ENCODE measurements at regions of chr3 and their contacts with region 1.

Region 1: GRCh38 chr3:155270485-155271342 is 22.8 kb downstream of the STRIT1 start:
- DNase-seq: peak; percentile 74 to 79
- H3K4me3 ChIP-seq: peak overlapping the region; percentile 49
- H3K27ac ChIP-seq: peak overlapping the region; percentile 98
- H3K4me1 ChIP-seq: peaks cover 33% of the 10 kb centered on the region
- H3K27me3 ChIP-seq: no peaks in the 10 kb centered on the region
- CTCF ChIP-seq: 0 out of 2 replicates have a peak, but pooled peaks have one; percentile 27

Region 2: GRCh38 chr3:154971771-154972326 is 298.9 kb before region 1 on chr3:
- CTCF ChIA-PET with region 1: no interaction called
- POLR2A ChIA-PET with region 1: no interaction called
- intact Hi-C with region 1: loop called (anchors 2 kb)
- DNase-seq: peak in 1 of 2 experiments; percentile 63
- H3K4me3 ChIP-seq: no peak overlapping the region
- H3K27ac ChIP-seq: peak overlapping the region; percentile 62
- H3K4me1 ChIP-seq: peaks cover 21% of the 10 kb centered on the region
- H3K27me3 ChIP-seq: no peaks in the 10 kb centered on the region
- CTCF ChIP-seq: no peak

Region 3: DNA sequence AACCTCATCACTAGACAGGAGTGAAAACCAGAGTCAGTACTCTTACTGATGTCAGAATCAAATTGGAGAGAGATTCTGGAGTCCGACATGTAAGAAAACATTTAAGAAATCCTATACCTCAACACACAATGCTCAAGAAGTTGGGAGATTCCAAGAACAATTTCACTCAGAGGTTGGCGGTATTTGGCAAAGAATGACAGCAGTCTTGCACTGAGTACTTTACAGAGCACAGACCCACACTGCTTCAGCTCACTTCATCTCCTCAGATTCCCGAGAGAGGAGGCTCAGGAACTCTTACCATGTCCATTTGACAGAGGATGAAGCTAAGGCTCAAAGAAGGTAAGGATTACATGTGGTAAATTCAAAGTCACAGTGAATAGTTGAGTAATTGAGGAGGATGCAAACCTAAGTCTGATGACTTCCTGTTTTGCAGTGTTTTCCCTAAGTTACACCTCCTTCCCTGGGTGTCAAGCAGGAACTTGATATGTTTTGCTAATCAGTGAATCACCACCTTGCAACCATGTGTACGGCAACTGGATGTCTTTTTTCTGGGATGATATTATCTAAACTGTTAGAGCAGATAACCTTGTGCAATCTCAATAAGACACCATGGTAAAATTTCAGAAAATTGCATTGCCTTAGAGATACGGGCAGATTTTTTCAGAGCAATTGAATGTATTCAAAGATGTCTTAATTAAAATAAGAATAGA is 251.9 kb before region 1 on chr3:
- CTCF ChIA-PET with region 1: no interaction called
- POLR2A ChIA-PET with region 1: no interaction called
- intact Hi-C with region 1: loop called (anchors 2 kb)
- DNase-seq: peak; percentile 21 to 42
- H3K4me3 ChIP-seq: no peak overlapping the region
- H3K27ac ChIP-seq: peak overlapping the region; percentile 17; the same call in 1 of the 2 replicates
- H3K4me1 ChIP-seq: peaks cover 16% of the 10 kb centered on the region
- H3K27me3 ChIP-seq: no peaks in the 10 kb centered on the region
- CTCF ChIP-seq: no peak

Region 4: DNA sequence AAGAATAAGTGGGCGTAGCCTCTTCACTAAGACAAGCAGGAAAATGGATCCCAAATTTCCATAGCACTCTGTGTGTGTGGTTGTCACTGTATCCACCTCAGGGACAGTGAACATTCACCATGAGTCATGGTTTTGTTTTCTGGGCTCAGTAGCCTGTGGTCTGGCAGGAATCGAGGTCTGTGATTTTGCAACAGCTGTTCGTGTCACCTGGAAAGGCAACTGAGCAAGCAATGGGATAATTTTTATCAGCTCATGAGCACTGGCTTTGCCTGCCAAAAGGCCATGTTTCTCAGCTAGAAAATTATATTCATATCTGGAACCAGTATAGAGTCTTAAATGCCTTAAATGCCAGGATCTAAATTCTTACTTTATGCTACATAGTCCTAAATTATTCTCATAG is 38.1 kb before region 1 on chr3:
- CTCF ChIA-PET with region 1: no interaction called
- POLR2A ChIA-PET with region 1: interaction called, 4 read pairs
- intact Hi-C with region 1: loop called (anchors 1 kb)
- DNase-seq: peak; percentile 75 to 94
- H3K4me3 ChIP-seq: no peak overlapping the region
- H3K27ac ChIP-seq: peak overlapping the region; percentile 67
- H3K4me1 ChIP-seq: peaks cover 23% of the 10 kb centered on the region
- H3K27me3 ChIP-seq: no peaks in the 10 kb centered on the region
- CTCF ChIP-seq: no peak

Region 5: DNA sequence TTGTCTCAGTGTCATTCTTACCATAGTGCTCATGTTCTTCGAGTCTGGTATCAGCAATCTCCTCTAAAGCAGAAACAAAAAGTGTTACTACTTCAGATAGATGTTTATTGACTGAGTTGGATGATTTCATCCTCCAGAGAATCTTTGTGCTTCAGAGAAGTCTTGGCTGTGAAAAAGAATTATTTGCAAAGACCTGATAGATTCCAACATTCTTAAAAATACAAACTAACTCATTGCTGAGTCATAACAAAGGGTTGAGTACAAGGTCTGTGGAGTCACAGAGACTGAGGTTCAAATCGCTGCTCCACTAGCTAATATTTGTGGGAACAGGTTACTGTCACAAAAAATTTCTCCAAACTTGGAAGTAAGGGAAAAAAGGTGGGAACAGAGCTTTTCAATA is 31.8 kb after region 1 on chr3:
- CTCF ChIA-PET with region 1: no interaction called
- POLR2A ChIA-PET with region 1: interaction called, 14 read pairs
- intact Hi-C with region 1: no loop called
- DNase-seq: no peak
- H3K4me3 ChIP-seq: no peak overlapping the region
- H3K27ac ChIP-seq: no peak overlapping the region
- H3K4me1 ChIP-seq: no peaks in the 10 kb centered on the region
- H3K27me3 ChIP-seq: no peaks in the 10 kb centered on the region
- CTCF ChIP-seq: no peak

Region 6: GRCh38 chr3:155330370-155330769 is 59.7 kb after region 1 on chr3:
- CTCF ChIA-PET with region 1: no interaction called
- POLR2A ChIA-PET with region 1: no interaction called
- intact Hi-C with region 1: no loop called
- DNase-seq: no peak
- H3K4me3 ChIP-seq: no peak overlapping the region
- H3K27ac ChIP-seq: no peak overlapping the region
- H3K4me1 ChIP-seq: no peaks in the 10 kb centered on the region
- H3K27me3 ChIP-seq: no peaks in the 10 kb centered on the region
- CTCF ChIP-seq: no peak

Region 7: DNA sequence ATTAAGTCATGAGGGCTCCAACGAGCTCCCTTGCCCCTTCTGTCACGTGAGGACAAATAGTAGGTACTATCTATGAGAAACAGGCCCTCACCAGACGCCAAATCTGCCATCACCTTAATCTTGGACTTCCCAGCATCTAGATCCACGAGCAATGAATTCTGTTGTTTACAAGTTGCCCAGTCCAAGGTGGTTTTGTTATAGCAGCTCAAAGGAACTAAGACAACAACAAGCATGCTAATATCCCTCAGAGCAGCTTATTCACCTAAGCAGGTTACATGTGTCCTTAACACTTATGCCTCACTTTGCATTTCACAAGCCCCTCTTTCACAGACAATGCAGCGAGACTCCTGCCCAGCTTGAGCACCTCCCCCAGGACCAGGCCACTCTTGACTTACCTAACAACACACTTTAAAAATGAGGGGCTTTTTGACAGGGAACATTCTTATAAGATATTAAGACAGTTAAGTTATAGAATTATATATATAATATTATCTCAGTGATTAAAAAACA is 254.7 kb after region 1 on chr3:
- CTCF ChIA-PET with region 1: no interaction called
- POLR2A ChIA-PET with region 1: no interaction called
- intact Hi-C with region 1: no loop called
- DNase-seq: no peak
- H3K4me3 ChIP-seq: no peak overlapping the region
- H3K27ac ChIP-seq: no peak overlapping the region
- H3K4me1 ChIP-seq: no peaks in the 10 kb centered on the region
- H3K27me3 ChIP-seq: no peaks in the 10 kb centered on the region
- CTCF ChIP-seq: no peak

Region 8: DNA sequence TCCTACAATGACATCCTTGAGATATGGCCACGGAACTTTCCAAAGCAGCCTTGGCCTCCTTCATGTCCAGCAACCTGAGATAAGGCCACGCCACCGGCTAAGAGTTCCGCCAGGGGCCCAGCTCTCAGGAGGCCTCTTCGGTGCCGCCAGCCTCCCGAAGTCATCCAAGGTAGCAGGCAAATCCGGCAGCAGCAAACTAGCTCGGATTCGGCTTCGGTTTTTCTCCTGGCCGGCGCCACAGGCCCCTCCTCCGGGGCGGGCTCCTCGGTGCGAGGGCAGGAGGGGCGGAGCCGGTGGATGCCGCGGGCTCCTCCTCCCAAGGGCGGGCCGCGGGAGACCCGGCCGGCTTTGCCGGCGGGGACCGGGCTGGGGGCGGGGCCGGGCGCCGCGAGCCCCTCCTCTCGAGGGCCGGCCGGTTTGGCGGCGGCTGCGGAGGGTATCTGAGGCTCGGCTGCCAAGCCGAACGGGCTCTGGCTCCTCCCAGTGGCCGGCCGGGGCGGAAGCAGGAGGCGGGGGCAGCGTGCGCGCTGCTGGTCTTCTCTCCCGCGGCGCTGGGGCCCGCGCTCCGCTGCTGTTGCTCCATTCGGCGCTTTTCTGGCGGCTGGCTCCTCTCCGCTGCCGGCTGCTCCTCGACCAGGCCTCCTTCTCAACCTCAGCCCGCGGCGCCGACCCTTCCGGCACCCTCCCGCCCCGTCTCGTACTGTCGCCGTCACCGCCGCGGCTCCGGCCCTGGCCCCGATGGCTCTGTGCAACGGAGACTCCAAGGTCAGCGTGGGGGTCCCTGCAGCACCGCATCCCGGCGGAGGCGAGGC is 599.6 kb after region 1 on chr3 and contains the start of gene GMPS:
- CTCF ChIA-PET with region 1: no interaction called
- POLR2A ChIA-PET with region 1: interaction called, 10 read pairs
- intact Hi-C with region 1: no loop called
- DNase-seq: peak; percentile 84 to 99
- H3K4me3 ChIP-seq: peak within 1 kb of the TSS; percentile 91
- H3K27ac ChIP-seq: peak within 1 kb of the TSS; percentile 79
- H3K4me1 ChIP-seq: peaks cover 21% of the 10 kb centered on the region
- H3K27me3 ChIP-seq: no peaks in the 10 kb centered on the region
- CTCF ChIP-seq: peak; percentile 58
- total RNA-seq, gene GMPS: 116 and 139 TPM in 2 replicates

Measured in PC-9 (cell line).